PC-9 (cell line): ENCODE measurements at regions of chr7 and their contacts with region 1.

Region 1: GRCh38 chr7:99499371-99499720 is 735 bp downstream of the ZNF394 start:
- DNase-seq: no peak
- H3K4me3 ChIP-seq: peak overlapping the region; percentile 76
- H3K27ac ChIP-seq: peak overlapping the region; percentile 57; the same call in 1 of the 2 replicates
- H3K4me1 ChIP-seq: peaks cover 19% of the 10 kb centered on the region
- H3K27me3 ChIP-seq: no peaks in the 10 kb centered on the region
- CTCF ChIP-seq: no peak

Region 2: DNA sequence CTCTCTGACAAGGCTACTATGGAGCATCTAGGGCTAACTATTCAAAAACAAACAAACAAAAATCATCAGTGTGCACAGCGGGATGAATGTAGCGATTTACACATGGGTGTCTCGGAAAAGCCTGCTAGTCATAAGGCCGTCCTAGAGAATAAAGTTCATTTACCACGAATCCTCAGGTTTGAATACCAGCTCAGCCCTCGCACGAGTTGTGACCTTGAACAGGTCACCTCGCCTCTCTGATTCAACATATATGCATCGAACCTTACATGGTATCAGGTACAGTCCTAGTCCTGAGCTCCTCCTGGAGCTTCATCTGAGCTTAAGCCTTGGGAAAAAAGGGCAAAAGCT is 34.0 kb before region 1 on chr7:
- CTCF ChIA-PET with region 1: no interaction called
- POLR2A ChIA-PET with region 1: no interaction called
- intact Hi-C with region 1: no loop called
- DNase-seq: no peak
- H3K4me3 ChIP-seq: peak overlapping the region; percentile 74
- H3K27ac ChIP-seq: peak overlapping the region; percentile 62
- H3K4me1 ChIP-seq: peaks cover 12% of the 10 kb centered on the region
- H3K27me3 ChIP-seq: no peaks in the 10 kb centered on the region
- CTCF ChIP-seq: no peak

Region 3: DNA sequence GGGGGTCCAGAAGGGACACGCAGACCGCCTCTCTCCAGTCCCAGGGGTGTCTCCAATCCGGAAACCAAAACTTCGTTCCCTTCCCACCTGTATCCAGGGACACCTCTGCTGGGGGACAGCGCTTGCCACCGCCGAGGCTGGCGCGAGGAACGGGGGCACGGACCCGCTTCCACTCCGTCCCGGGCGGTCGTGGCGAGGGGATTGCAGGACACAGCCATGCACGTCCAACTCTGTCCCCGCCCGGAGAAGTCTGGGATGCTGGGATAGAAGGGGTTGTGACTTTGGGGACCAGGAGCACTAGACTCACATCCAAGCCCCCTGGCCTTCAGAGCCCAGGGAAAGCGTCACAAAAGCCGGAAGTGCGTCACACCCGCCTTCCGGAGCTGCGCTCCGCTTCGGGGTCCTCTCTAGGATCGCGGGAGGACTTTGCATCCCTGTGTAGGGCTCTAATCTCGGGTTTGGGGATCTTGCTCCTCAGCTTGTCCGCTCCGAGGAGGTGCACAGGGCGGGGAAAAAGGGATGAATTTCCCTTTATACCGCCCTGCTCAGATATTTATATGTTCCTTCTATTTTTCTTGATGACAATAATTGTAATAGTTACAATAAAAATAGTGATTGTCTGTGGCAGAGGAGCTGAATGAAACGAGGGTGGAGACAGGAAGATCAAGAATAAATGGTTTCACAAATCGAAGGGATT is 52.6 kb after region 1 on chr7 and contains the start of gene FAM200A:
- CTCF ChIA-PET with region 1: interaction called, 14 read pairs
- POLR2A ChIA-PET with region 1: interaction called, 3 read pairs
- intact Hi-C with region 1: no loop called
- DNase-seq: peak; percentile 75 to 80
- H3K4me3 ChIP-seq: peak within 1 kb of the TSS; percentile 78
- H3K27ac ChIP-seq: 0 out of 2 replicates have a peak within 1 kb of the TSS, but pooled peaks have one; percentile 11
- H3K4me1 ChIP-seq: 0 out of 2 replicates have a peak, but pooled peaks cover 9% of the 10 kb centered on the region
- H3K27me3 ChIP-seq: no peaks in the 10 kb centered on the region
- CTCF ChIP-seq: no peak
- total RNA-seq, gene FAM200A: 6.9 and 7.1 TPM in 2 replicates

Region 4: DNA sequence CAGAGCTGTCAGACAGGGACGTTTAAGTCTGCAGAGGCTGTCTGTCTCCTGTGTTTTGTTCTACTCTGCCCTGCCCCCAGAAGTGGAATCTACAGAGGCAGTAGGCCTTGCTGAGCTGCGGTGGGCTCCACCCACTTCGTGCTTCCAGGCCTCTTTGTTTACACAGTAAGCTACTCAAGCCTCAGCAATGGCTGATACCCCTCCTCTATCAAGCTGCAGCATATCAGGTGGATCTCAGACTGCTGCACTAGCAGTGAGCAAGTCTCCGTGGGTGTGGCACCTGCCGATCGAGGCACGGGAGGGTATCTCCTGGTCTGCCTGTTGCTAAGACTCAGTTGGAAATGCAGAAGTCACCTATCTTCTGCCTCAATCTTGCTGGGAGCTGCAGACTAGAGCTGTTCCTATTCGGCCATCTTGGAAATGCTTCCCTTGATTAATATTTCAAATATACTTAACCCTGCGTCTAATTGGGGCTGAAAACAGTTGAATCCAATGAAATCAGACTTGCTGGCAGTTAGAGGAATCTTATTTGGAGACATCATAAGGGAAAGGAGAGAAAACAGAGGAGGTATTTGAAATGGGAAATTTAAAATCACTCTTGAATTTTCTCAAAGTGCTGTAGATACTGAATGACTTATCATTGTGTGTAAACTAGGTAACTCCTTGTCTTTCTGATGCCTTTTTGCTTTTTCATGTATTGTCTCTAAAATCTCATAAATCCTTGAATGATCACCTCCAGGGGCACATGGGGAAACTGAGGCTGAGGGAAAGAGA is 194.3 kb after region 1 on chr7:
- CTCF ChIA-PET with region 1: no interaction called
- POLR2A ChIA-PET with region 1: no interaction called
- intact Hi-C with region 1: no loop called
- DNase-seq: peak; percentile 76 to 86
- H3K4me3 ChIP-seq: no peak overlapping the region; the same call in 1 of the 2 replicates
- H3K27ac ChIP-seq: peak overlapping the region; percentile 1; the same call in 1 of the 2 replicates
- H3K4me1 ChIP-seq: peaks cover 33% of the 10 kb centered on the region
- H3K27me3 ChIP-seq: no peaks in the 10 kb centered on the region
- CTCF ChIP-seq: no peak